BJ (cell line): ENCODE measurements at regions of chr1 and their contacts with region 1.

Region 1: DNA sequence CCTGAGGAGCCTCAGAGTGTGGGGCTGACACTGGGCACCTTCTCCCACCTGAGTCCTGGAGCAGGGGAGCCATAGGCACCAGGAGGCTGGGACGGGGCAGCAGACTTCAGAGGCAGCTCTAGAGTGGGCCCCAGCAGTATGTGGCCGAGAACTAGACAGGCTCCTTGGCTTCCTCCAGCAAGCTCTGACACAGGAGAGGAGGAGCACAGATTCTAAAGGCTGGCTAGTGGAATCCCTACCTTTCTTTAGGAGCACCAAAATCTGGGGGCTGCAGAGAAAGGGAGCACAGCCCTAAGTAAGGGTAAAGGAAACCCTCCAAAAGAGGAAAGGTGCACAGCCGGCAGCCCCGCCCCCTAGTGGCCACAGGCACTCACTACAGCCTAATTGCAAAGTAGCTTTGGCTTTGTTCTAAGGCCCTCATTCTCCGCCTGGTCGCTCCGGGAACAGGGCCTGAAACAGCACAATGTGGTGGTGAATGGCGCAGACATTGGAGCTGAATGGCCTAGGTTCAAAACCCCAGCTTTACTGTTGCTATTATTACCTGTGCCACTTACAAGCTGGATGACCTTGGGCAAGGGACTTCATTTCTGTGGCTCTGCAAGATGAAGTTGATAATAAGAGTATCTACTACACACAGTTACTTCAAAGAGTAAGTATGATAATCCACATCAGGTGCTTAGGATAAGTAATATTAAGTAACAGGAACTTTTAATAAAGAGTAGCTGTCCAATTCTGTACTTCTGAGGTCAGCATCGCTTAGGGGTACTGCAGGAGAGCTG is 8.8 kb upstream of the GUCA2A start:
- DNase-seq: no peak
- H3K4me3 ChIP-seq: no peak overlapping the region
- H3K27me3 ChIP-seq: no peaks in the 10 kb centered on the region
- CTCF ChIP-seq: peak; percentile 97

Region 2: GRCh38 chr1:41812051-41812450 is 361.3 kb before region 1 on chr1:
- CTCF ChIA-PET with region 1: interaction called, 10 read pairs
- POLR2A ChIA-PET with region 1: no interaction called
- DNase-seq: no peak
- H3K4me3 ChIP-seq: no peak overlapping the region
- H3K27me3 ChIP-seq: no peaks in the 10 kb centered on the region
- CTCF ChIP-seq: peak; percentile 75

Region 3: GRCh38 chr1:41919764-41920397 is 253.5 kb before region 1 on chr1:
- CTCF ChIA-PET with region 1: no interaction called
- POLR2A ChIA-PET with region 1: no interaction called
- DNase-seq: no peak
- H3K4me3 ChIP-seq: no peak overlapping the region
- H3K27me3 ChIP-seq: no peaks in the 10 kb centered on the region
- CTCF ChIP-seq: no peak

Region 4: DNA sequence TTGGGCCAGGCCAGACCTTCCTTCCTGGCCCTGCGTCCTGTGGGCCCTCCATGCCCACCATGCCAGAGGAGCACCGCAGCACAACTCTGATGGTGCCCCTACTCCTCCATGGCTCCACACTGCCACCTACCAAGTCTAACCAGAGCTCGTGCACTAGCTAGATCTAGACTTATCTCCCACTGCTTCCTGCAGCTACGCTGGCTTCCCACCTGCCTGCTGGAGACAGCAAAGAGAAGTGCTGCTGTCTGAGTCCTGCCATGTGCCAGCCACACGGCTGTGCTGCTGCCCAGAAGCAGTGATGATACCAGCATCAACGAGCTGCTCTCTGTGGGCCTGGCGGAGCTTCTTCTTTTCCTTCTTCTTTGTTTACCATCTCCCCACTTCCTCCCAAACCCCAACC is 15.7 kb before region 1 on chr1:
- CTCF ChIA-PET with region 1: interaction called, 46 read pairs
- POLR2A ChIA-PET with region 1: no interaction called
- DNase-seq: no peak
- H3K4me3 ChIP-seq: no peak overlapping the region
- H3K27me3 ChIP-seq: peaks cover 4% of the 10 kb centered on the region
- CTCF ChIP-seq: no peak

Region 5: DNA sequence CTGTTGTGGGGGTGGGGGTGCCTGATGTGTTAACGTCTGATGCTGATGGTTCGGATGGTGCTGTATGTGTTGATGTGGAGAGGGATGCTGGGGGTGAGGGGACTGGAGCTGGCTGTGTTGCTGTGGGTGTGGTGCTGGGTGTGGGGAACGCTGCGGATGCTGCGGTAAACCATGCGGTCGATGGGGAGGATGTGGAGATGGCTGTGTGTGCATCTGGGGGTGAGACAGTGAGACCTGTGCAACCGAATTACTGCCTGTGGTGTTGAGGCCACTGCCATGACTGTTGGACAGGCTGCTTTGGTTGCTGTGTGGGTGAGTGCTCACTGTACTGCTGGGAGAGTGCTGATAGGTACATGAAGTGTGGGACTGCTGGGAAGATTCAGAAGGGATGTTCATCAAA is 18.0 kb after region 1 on chr1:
- CTCF ChIA-PET with region 1: interaction called, 17 read pairs
- POLR2A ChIA-PET with region 1: no interaction called
- DNase-seq: no peak
- H3K4me3 ChIP-seq: no peak overlapping the region
- H3K27me3 ChIP-seq: no peaks in the 10 kb centered on the region
- CTCF ChIP-seq: no peak